ENCODE measurements at regions of chr9 and their contacts with region 1.

Region 1: GRCh38 chr9:90827181-90827871 is 25.7 kb downstream of the SYK start:
- DNase-seq: peak; percentile 67
- CTCF ChIP-seq: no peak

Region 2: GRCh38 chr9:90808890-90809685 is 18.2 kb before region 1 on chr9:
- CTCF ChIA-PET with region 1: interaction called, 33 read pairs
- POLR2A ChIA-PET with region 1: interaction called, 3 read pairs
- DNase-seq: no peak
- CTCF ChIP-seq: no peak

Region 3: DNA sequence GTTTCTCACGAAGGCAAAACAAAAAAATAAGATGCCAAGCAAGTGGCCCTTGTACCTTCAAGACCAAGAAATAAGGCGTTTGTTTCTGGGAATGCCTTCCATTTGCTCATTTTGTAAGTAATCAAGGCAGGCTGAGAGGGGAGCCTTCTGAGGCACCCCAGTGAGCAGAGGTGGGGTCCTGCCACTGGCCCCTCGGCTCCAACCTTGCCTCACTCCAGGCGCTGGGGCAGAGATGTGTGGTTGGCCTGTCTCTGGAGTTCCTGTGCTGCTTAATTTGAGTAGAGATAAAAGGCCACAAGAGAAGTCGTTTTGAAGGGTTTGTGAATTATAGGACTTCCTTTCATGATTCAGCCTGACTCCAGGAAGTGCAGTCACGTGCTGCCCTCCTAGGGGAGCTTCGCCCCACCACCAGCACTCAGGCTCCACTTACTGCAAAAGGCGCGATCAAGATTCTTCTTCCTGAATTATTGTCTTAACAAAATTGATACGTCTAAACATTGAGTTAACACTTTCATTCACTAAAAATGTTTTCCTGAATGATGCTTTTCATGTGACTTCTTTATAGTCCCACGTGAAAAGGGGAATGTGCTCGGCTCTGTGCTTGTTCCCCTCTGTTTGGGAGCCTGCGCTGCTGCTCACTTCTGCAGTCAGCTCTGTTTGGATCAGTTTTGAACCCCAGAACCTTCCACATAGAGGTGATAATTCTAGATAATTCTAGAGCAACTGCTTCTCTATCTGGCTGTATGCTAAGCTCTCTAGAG is 12.0 kb before region 1 on chr9:
- CTCF ChIA-PET with region 1: interaction called, 33 read pairs
- POLR2A ChIA-PET with region 1: no interaction called
- DNase-seq: no peak
- CTCF ChIP-seq: no peak